Naive thymus-derived CD4-positive, alpha-beta T cell (primary cell): ENCODE measurements at regions of chr14 and their contacts with region 1.

Region 1: DNA sequence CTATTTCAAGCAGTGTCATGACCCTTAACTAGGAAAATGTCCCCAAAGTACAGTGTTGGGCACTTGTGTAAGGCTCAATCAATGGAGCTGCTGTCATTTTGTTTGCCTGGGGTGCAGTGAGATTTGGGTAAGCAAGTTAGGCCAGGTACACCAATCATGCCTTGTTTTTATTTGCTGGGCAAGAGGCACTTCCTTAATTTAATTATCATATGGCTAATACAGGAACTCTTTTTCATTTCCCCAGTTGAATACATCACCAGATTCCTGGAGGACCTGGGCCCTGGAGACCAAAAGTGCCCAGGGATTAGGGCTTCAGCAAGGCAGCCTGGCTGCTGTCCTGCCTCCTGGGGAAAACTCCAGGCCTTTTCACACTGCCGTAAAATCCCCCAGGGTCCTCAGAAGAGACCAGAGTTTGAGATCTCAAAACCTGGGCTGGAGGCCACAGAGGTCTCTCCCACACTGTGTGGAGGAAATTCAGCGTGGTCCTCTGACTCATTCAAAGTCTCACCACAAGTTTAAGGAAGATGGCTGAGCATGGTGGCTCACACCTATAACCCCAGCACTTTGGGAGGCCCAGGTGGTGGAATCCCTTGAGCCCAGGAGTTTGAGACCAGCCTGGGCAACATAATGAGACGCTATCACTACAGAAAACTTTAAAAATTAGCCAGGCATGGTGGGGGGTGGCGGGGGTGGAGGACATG is 28.4 kb upstream of the FOXN3 start:
- DNase-seq: peak in 1 of 9 donors; percentile 46
- ATAC-seq: peak; percentile 62
- H3K4me3 ChIP-seq: no peak overlapping the region
- H3K4me3 Mint-ChIP-seq: peak overlapping the region in 9 of 10 donors; percentile 2 to 73 (median 25)
- H3K27ac ChIP-seq: peak overlapping the region; percentile 50
- H3K27ac Mint-ChIP-seq: peak overlapping the region in 8 of 9 donors; percentile 62 to 88 (median 76)
- H3K4me1 ChIP-seq: peaks cover 12 to 61% of the 10 kb centered on the region in 2 donors
- H3K4me1 Mint-ChIP-seq: peaks cover 52 to 90% (median 80%) of the 10 kb centered on the region in 7 donors
- H3K27me3 ChIP-seq: no peaks in the 10 kb centered on the region
- H3K27me3 Mint-ChIP-seq: no peaks in the 10 kb centered on the region

Region 2: GRCh38 chr14:89053303-89053702 is 392.1 kb before region 1 on chr14:
- CTCF ChIA-PET with region 1: no interaction called
- POLR2A ChIA-PET with region 1: no interaction called
- intact Hi-C with region 1: no loop called
- DNase-seq: no peak
- ATAC-seq: no peak
- H3K4me3 ChIP-seq: no peak overlapping the region
- H3K4me3 Mint-ChIP-seq: no peak overlapping the region
- H3K27ac ChIP-seq: no peak overlapping the region
- H3K27ac Mint-ChIP-seq: no peak overlapping the region
- H3K4me1 ChIP-seq: no peaks in the 10 kb centered on the region
- H3K4me1 Mint-ChIP-seq: no peaks in the 10 kb centered on the region
- H3K27me3 ChIP-seq: no peaks in the 10 kb centered on the region
- H3K27me3 Mint-ChIP-seq: peaks cover 0 to 15% (median 4%) of the 10 kb centered on the region in 5 donors

Region 3: DNA sequence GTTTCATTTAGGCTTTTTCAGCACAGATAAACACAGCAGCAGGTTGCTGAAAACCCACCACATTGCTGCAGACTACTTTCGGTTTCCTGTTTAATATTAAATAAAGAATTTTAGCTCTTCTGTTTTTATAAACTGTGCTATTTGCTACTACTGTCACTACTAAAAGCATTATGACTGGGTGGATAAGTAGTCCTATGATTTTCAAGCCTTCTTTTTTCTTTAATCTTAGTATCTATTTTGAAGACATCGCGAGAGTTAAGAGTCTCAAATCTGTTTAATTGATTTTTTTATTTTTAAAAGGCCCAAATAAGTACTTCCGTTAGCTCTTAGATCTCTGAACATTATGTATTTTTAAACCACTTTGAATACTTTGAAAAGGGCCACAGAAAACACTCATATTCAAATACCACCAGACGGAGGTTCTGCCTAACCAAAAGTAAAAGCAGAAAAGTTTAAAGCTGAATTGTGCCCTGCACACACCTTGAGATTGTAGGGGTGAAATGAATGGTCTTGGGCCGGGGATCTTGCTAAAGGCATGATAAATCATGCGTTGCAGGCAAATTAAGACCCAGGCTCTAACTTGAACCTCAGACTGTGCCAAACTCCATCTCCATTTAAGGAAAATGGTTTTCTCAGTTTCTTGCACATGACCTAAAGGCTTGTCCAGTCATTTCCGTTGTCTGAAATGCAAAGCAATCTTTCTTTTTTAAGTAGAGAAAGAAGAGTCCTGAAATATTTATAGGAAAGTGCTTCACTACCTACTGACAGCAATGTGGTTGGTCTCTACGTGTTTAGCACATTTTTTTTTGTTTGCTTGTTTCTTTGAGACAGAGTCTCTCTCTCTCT is 14.8 kb before region 1 on chr14:
- CTCF ChIA-PET with region 1: interaction called, 3 read pairs
- POLR2A ChIA-PET with region 1: interaction called, 3 read pairs
- intact Hi-C with region 1: loop called (anchors 2 kb)
- DNase-seq: peak in 7 of 9 donors; percentile 59 to 85 (median 78)
- ATAC-seq: peak; percentile 84
- H3K4me3 ChIP-seq: peak overlapping the region; percentile 56
- H3K4me3 Mint-ChIP-seq: peak overlapping the region; percentile 75 to 88 (median 82)
- H3K27ac ChIP-seq: peak overlapping the region; percentile 68
- H3K27ac Mint-ChIP-seq: peak overlapping the region; percentile 72 to 93 (median 83)
- H3K4me1 ChIP-seq: peaks cover 29 to 30% of the 10 kb centered on the region in 2 donors
- H3K4me1 Mint-ChIP-seq: peaks cover 28 to 77% (median 63%) of the 10 kb centered on the region in 7 donors
- H3K27me3 ChIP-seq: no peaks in the 10 kb centered on the region
- H3K27me3 Mint-ChIP-seq: no peaks in the 10 kb centered on the region

Region 4: GRCh38 chr14:89504602-89505313 is 59.3 kb after region 1 on chr14:
- CTCF ChIA-PET with region 1: no interaction called
- POLR2A ChIA-PET with region 1: no interaction called
- intact Hi-C with region 1: loop called in 1 of 2 experiments (anchors 5 kb)
- DNase-seq: peak in 1 of 9 donors; percentile 26
- ATAC-seq: peak; percentile 89
- H3K4me3 ChIP-seq: no peak overlapping the region
- H3K4me3 Mint-ChIP-seq: peak overlapping the region in 4 of 10 donors; percentile 18 to 42 (median 25)
- H3K27ac ChIP-seq: no peak overlapping the region
- H3K27ac Mint-ChIP-seq: peak overlapping the region in 7 of 9 donors; percentile 8 to 78 (median 40)
- H3K4me1 ChIP-seq: peaks cover 5 to 6% of the 10 kb centered on the region in 2 donors
- H3K4me1 Mint-ChIP-seq: peaks cover 39 to 71% (median 60%) of the 10 kb centered on the region in 7 donors
- H3K27me3 ChIP-seq: no peaks in the 10 kb centered on the region
- H3K27me3 Mint-ChIP-seq: no peaks in the 10 kb centered on the region